Activated T-helper 2 cell treated with anti-CD3 and anti-CD28 coated beads, Interferon-gamma antibody, Interleukin-2, Interleukin-4, amounts not matched to agents 10 μg/mL and 5 μg/mL and 100 μg/mL, durations not matched to agents 14 hours and 24 hours and 36 hours (primary cell): ENCODE measurements at regions of chr5 and their contacts with region 1.

Region 1: DNA sequence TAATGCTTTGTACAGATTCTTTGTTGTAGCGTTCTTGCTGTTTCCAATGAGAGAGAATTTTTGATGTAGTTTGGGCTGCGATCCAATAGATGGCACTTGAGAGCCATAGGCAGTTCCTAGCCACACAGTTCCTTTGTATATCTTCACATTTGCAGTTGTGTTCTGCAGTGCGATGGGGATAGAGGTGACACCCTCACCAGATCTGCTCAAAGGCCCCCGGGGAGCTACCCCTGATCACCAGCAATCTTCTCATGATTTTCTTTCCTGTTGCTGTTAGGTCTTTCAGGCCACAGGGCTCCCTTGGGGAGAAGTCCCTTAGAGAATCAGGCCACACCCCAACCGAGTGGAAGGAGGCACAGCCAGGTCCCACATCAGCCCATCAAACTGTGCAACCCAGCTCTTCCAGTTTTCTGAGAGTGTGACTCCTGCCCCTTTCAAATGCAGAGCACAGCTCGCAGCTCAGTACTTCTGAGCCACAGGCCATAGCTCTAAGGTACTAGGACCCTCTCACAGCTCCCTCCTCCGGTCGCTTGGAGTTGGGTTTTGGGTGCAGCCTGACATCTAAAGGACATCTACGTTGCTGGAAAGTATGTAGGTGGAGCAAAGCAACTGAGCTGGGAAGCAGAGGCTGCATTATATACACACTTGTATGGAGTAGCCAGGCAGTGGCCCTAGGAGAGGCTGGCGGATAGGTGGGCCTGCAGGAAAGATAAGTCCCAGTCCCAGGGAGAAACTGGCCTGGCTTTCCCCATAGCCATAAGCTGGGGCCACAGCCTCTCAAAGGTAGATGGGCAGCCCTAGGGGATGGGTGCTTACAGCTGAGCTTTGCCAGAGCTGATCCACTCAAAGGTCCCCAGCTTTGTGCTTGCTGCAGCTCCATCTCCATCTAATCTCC is 353.5 kb downstream of the SLCO4C1 start:
- DNase-seq: no peak
- H3K4me3 Mint-ChIP-seq: no peak overlapping the region
- H3K27ac Mint-ChIP-seq: no peak overlapping the region
- H3K4me1 Mint-ChIP-seq: peaks cover 4% of the 10 kb centered on the region
- H3K27me3 Mint-ChIP-seq: no peaks in the 10 kb centered on the region

Region 2: GRCh38 chr5:101977729-101978345 is 35.3 kb after region 1 on chr5:
- intact Hi-C with region 1: loop called (anchors 1 kb)
- DNase-seq: no peak
- H3K4me3 Mint-ChIP-seq: no peak overlapping the region
- H3K27ac Mint-ChIP-seq: no peak overlapping the region
- H3K4me1 Mint-ChIP-seq: no peaks in the 10 kb centered on the region
- H3K27me3 Mint-ChIP-seq: no peaks in the 10 kb centered on the region

Region 3: GRCh38 chr5:102153003-102153759 is 210.6 kb after region 1 on chr5:
- intact Hi-C with region 1: loop called (anchors 2 kb)
- DNase-seq: no peak
- H3K4me3 Mint-ChIP-seq: no peak overlapping the region
- H3K27ac Mint-ChIP-seq: no peak overlapping the region
- H3K4me1 Mint-ChIP-seq: no peaks in the 10 kb centered on the region
- H3K27me3 Mint-ChIP-seq: no peaks in the 10 kb centered on the region

Region 4: GRCh38 chr5:102223542-102224477 is 281.2 kb after region 1 on chr5:
- intact Hi-C with region 1: loop called (anchors 1 kb)
- DNase-seq: no peak
- H3K4me3 Mint-ChIP-seq: no peak overlapping the region
- H3K27ac Mint-ChIP-seq: no peak overlapping the region
- H3K4me1 Mint-ChIP-seq: no peaks in the 10 kb centered on the region
- H3K27me3 Mint-ChIP-seq: peaks cover 4% of the 10 kb centered on the region